Calu3 (cell line): ENCODE measurements at regions of chr15 and their contacts with region 1.

Region 1: GRCh38 chr15:62591842-62592838 is 427.1 kb upstream of the C2CD4B start:
- DNase-seq: no peak
- H3K4me3 Mint-ChIP-seq: no peak overlapping the region
- H3K27ac Mint-ChIP-seq: no peak overlapping the region
- H3K4me1 Mint-ChIP-seq: peaks cover 27% of the 10 kb centered on the region
- H3K27me3 Mint-ChIP-seq: peaks cover 7% of the 10 kb centered on the region
- CTCF ChIP-seq: no peak

Region 2: DNA sequence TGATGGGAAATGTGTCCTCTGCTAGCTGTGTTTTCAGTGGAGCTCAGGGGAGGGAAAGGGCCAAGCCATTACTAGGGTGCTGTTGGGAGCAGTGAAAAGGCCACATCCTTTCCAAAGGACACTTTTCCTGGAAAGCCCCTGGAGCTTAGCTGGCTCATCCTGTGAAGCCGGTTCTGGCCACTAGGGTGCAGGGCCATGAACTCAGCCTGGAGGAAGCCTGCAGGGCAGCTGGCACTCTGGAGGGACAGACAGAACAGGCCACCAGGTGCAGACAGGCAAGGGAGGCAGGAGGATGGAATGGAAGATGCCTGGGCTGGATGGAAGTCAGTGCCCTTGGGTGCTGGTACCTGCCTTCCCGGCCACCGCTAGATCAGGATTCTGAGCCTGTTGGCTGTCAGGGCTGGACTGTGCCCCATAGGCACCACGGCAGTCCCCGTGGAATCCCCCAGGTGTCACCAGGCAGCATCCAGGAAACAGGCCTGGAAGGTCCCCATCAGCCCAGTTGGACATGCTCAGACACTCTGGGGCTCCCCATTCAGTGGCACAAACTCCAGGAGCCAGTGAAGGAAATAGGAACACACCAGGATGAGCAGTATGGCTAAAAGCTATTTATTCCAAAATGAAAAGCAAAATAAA is 350.9 kb before region 1 on chr15:
- CTCF ChIA-PET with region 1: no interaction called
- intact Hi-C with region 1: no loop called
- DNase-seq: peak; percentile 63
- H3K4me3 Mint-ChIP-seq: no peak overlapping the region
- H3K27ac Mint-ChIP-seq: no peak overlapping the region
- H3K4me1 Mint-ChIP-seq: peaks cover 31% of the 10 kb centered on the region
- H3K27me3 Mint-ChIP-seq: no peaks in the 10 kb centered on the region
- CTCF ChIP-seq: peak; percentile 44

Region 3: GRCh38 chr15:62603757-62604156 is 11.6 kb after region 1 on chr15:
- CTCF ChIA-PET with region 1: interaction called, 13 read pairs
- intact Hi-C with region 1: no loop called
- DNase-seq: no peak
- H3K4me3 Mint-ChIP-seq: no peak overlapping the region
- H3K27ac Mint-ChIP-seq: no peak overlapping the region
- H3K4me1 Mint-ChIP-seq: peaks cover 34% of the 10 kb centered on the region
- H3K27me3 Mint-ChIP-seq: peaks cover 29% of the 10 kb centered on the region
- CTCF ChIP-seq: no peak